ENCODE measurements at regions of chr3 and their contacts with region 1.

Region 1: DNA sequence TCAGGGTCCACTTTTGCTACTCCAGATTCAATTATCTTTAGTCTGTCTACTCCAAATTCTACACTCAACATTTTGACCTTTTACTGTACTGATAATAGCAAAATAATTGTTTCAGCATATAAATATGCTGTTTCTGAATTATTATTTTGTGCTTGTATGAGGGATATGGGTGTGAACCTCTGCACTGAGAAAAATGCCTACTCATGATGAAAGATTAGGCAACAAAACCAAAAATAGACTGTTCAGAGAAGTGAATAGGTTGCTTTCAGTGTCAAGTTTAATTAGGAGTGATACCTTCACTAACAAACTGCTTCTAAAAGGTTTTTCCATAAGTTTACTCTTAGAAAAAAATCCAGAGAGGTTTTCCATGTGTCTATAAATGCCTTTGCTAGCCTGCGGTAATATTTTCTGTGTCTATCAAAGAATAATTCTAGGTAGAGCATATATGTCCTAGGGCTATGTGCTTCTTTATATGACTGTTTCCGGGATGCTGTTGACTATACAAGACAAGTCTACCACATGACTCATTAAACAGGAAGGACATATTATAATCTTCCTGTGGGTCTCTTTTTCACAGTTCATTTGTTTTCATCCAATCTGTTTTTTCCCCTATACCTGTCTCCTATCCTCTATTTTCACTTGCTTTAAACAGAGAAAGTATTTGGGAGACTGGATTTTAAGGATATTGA is 218.5 kb upstream of the TTC14 start:
- DNase-seq: peak; percentile 75
- ATAC-seq: peak; percentile 90
- H3K4me3 ChIP-seq: no peak overlapping the region
- H3K27ac ChIP-seq: peak overlapping the region; percentile 69
- H3K4me1 ChIP-seq: peaks cover 32% of the 10 kb centered on the region
- H3K27me3 ChIP-seq: no peaks in the 10 kb centered on the region
- CTCF ChIP-seq: no peak

Region 2: GRCh38 chr3:180408654-180409053 is 25.2 kb after region 1 on chr3:
- CTCF ChIA-PET with region 1: no interaction called
- POLR2A ChIA-PET with region 1: no interaction called
- intact Hi-C with region 1: loop called (anchors 2 kb)
- DNase-seq: peak; percentile 95
- ATAC-seq: peak; percentile 94
- H3K4me3 ChIP-seq: peak overlapping the region; percentile 47
- H3K27ac ChIP-seq: peak overlapping the region; percentile 93
- H3K4me1 ChIP-seq: peaks cover 31% of the 10 kb centered on the region
- H3K27me3 ChIP-seq: no peaks in the 10 kb centered on the region
- CTCF ChIP-seq: no peak

Region 3: GRCh38 chr3:180421221-180421620 is 37.7 kb after region 1 on chr3:
- CTCF ChIA-PET with region 1: no interaction called
- POLR2A ChIA-PET with region 1: no interaction called
- intact Hi-C with region 1: no loop called
- DNase-seq: peak; percentile 33
- ATAC-seq: peak; percentile 11; the same call in 1 of the 2 replicates
- H3K4me3 ChIP-seq: no peak overlapping the region; the same call in 1 of the 2 replicates
- H3K27ac ChIP-seq: peak overlapping the region; percentile 92
- H3K4me1 ChIP-seq: peaks cover 52% of the 10 kb centered on the region
- H3K27me3 ChIP-seq: no peaks in the 10 kb centered on the region
- CTCF ChIP-seq: no peak

Region 4: DNA sequence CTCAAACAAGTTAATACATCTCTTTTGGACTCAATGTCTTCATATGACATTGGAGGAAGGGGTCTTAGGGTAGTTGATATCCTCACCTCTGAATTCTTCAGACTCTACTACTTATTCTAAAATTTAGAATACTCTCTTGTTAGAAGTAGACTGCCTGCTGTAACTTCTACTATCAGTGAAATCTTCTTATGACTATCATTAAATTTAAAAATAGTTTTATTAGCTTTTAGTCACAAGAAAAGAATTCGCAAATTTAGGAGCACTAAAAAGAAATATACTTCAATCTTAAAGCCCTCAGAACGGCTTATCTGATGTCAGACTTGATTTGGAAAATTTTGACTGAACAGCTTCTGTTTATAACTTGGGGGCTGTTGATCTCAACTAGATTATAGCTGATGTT is 151.4 kb after region 1 on chr3:
- CTCF ChIA-PET with region 1: no interaction called
- POLR2A ChIA-PET with region 1: no interaction called
- intact Hi-C with region 1: loop called (anchors 1 kb)
- DNase-seq: peak; percentile 58
- ATAC-seq: peak; percentile 87
- H3K4me3 ChIP-seq: no peak overlapping the region
- H3K27ac ChIP-seq: peak overlapping the region; percentile 57
- H3K4me1 ChIP-seq: peaks cover 18% of the 10 kb centered on the region
- H3K27me3 ChIP-seq: no peaks in the 10 kb centered on the region
- CTCF ChIP-seq: no peak